ENCODE measurements at regions of chr4 and their contacts with region 1.

Region 1: DNA sequence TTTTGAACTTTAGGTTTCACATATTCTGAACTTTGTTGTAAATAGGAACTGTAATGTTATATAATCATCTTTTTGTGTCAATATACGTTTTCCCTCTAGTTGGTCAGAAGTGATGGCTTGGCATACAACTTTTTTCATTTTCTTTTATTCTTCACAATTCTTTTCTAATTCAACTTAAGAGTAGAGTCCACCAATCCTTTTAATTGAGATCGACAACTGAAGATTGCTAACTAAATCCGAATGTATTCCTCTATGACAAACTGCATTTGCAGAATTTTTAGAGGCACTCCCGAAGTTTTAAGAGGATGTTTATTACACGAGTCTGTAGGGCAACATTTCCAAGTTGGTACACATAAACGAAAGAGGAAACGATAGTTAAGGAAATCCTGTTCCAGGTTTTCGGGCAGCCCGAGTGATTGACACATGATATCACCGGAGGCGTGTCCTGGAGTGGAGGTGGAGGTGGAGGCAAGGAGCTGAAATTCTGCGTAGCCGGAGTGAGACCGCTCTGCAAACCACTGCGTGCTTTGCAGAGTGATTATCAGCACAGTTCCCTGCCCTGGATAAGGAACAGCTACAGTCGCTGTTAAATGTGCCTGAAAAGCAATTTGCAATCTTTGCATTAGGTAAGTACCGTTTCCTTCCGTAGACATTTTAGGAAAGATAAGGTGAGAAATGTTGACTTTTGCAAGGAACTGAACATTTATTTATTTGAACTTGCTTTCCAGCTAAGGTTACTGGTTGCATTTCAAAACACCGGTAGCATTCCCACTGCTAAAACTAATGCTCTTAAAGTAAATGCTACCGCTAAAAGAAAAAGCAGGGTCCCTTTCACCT is at the start of gene SPRY1:
- DNase-seq: peak; percentile 94
- total RNA-seq, gene SPRY1: 50.9 TPM

Region 2: GRCh38 chr4:123127218-123127617 is 269.3 kb before region 1 on chr4:
- intact Hi-C with region 1: loop called (anchors 2 kb)
- DNase-seq: no peak

Region 3: DNA sequence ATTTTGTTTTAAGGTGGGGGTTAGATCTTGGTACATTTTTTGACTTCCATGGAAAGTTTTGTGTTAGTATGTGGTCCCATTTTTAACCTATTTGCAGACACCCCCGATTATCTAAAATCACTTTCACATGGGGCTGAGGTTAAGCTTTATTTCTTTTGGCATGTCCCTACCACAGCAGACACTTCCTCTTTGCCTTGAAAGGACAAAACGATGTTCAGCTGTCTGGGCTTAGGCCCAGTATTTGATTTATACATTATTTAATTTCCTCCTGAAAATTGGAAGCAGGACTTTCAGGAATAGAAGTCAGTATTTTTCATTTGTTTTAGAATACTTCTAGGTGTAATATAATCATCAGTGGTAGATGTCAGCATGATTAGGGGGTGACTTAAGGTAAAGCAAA is 112.4 kb before region 1 on chr4:
- intact Hi-C with region 1: no loop called
- DNase-seq: no peak

Region 4: GRCh38 chr4:123340381-123340701 is 56.2 kb before region 1 on chr4:
- intact Hi-C with region 1: loop called (anchors 5 kb)
- DNase-seq: no peak

Region 5: GRCh38 chr4:123744664-123745290 is 348.3 kb after region 1 on chr4:
- intact Hi-C with region 1: loop called (anchors 5 kb)
- DNase-seq: no peak

Region 6: GRCh38 chr4:123832173-123833026 is 435.9 kb after region 1 on chr4:
- intact Hi-C with region 1: loop called (anchors 5 kb)
- DNase-seq: peak; percentile 81

Region 7: GRCh38 chr4:124111922-124112321 is 715.4 kb after region 1 on chr4:
- intact Hi-C with region 1: loop called (anchors 5 kb)
- DNase-seq: no peak